Activated T-helper 2 cell treated with anti-CD3 and anti-CD28 coated beads, Interferon-gamma antibody, Interleukin-2, Interleukin-4, amounts not matched to agents 10 μg/mL and 5 μg/mL and 100 μg/mL, durations not matched to agents 14 hours and 24 hours and 36 hours (primary cell): ENCODE measurements at regions of chr1 and their contacts with region 1.

Region 1: DNA sequence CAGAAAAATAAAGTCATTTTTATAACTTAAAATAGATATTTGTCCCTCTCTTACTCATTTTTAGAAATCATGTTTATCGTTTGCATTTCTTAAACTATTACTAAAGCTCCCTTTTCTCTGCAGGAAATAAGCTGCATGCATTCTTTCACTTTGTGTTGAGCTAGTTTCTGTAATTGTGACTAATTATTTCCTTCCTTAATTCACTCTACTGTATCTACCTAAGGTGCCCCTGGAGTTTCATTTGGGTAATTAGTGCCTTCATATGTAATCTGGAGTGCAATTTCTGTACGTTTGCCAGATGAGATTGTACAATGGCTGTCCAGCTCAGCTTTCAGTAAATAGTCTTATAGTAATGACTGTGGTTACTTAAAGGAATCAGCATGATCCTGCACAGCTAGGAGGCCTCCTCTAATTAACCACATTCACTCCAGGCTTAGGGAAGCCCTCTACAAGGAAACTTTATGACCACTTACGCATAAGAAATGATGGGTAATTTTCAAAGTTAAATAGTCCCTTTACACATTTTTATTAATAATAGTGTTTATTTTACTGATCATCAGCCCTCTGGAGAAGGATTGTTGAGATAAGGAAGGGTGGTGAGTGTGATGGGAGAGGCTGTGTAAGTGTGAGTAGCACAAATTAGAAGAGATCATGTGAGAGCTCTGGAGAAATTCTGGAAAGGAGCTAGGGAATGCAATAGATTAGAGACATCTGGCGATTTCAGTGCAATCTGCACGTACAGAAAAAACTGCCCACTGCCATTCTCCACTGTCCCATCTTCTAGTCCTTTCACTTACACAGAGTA is 86.8 kb downstream of the LRRC8C start:
- DNase-seq: no peak
- H3K4me3 Mint-ChIP-seq: peak overlapping the region; percentile 75
- H3K27ac Mint-ChIP-seq: peak overlapping the region; percentile 99
- H3K4me1 Mint-ChIP-seq: peaks cover 82% of the 10 kb centered on the region
- H3K27me3 Mint-ChIP-seq: no peaks in the 10 kb centered on the region

Region 2: GRCh38 chr1:89274411-89274857 is 445.3 kb before region 1 on chr1:
- intact Hi-C with region 1: loop called (anchors 10 kb)
- DNase-seq: no peak
- H3K4me3 Mint-ChIP-seq: peak overlapping the region; percentile 71
- H3K27ac Mint-ChIP-seq: peak overlapping the region; percentile 93
- H3K4me1 Mint-ChIP-seq: peaks cover 71% of the 10 kb centered on the region
- H3K27me3 Mint-ChIP-seq: no peaks in the 10 kb centered on the region

Region 3: DNA sequence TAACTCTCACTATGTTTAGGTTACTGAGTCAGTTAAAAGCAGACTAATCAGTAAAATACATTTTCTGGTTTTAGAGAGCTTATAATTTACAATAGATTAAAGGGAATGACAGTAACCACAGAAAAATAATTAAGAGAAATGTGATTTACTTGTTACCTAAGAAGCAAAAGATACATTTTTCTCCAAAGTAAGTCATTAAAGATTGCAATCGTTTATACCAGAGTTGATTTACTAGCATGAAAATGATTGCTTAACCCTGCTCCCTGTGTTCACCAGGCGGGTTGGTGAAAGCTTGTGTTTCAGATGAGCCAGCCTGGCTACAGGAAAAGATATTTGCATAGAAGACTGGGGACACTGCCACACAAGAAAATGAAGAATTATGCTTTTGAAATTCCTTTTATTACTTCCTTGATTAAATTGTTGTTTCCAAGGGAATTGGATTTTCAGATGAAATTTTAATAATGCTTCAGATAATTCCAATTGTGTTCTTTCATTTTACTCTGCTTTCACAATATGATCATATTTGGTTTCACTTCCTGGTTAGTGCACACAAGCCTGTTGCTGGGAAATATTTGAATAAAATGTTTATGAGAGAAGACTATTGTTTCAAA is 167.1 kb before region 1 on chr1:
- intact Hi-C with region 1: loop called (anchors 1 kb)
- DNase-seq: no peak
- H3K4me3 Mint-ChIP-seq: peak overlapping the region; percentile 38
- H3K27ac Mint-ChIP-seq: peak overlapping the region; percentile 74
- H3K4me1 Mint-ChIP-seq: peaks cover 77% of the 10 kb centered on the region
- H3K27me3 Mint-ChIP-seq: no peaks in the 10 kb centered on the region

Region 4: GRCh38 chr1:89657886-89658285 is 61.8 kb before region 1 on chr1:
- intact Hi-C with region 1: loop called (anchors 1 kb)
- DNase-seq: no peak
- H3K4me3 Mint-ChIP-seq: peak overlapping the region; percentile 14
- H3K27ac Mint-ChIP-seq: peak overlapping the region; percentile 75
- H3K4me1 Mint-ChIP-seq: peaks cover 79% of the 10 kb centered on the region
- H3K27me3 Mint-ChIP-seq: no peaks in the 10 kb centered on the region

Region 5: GRCh38 chr1:89732643-89733222 is 13.0 kb after region 1 on chr1:
- intact Hi-C with region 1: loop called (anchors 1 kb)
- DNase-seq: no peak
- H3K4me3 Mint-ChIP-seq: peak overlapping the region; percentile 17
- H3K27ac Mint-ChIP-seq: peak overlapping the region; percentile 90
- H3K4me1 Mint-ChIP-seq: peaks cover 62% of the 10 kb centered on the region
- H3K27me3 Mint-ChIP-seq: no peaks in the 10 kb centered on the region

Region 6: DNA sequence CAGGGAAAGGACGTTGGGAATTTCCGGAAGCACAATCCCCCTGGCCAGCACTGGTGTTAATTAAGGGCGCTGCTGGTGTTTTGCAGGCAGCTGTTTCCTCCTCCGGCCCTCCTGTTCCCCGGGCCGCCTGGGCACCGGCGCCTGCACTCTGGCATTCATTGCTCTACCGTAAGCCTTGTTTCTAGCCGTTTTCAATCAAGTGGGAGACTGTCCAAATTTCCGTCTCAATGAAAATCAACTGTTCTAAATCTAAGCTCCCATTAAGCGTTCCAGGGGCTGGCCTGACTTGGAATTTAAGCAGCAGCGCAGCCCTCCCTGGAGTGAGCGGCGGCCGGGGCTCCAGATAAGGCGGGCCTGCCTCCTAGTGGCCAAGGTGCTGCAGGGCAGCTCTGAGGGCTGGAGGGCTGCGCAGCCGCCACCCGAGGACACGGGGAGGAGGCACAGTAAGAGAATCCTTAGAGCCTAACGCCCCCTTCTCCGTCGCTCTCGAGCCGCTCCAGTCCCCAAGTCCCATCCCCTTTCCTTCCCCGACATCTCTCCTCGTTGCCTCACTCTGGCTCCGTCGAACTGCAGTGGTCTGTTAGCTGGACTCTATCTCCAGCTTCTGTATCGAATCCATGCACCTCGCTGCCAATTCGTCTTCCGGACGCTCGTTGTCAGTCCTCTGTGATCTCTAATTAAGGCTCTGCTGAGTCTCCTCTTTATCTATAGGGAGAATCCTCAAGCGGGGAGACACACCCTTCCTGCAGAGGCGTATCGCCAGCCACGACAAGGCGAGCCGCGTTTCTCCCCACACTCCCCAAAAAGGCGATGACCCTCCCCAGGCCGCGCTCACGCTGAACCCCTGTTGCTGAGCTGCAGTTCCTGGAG is 43.3 kb after region 1 on chr1:
- intact Hi-C with region 1: loop called (anchors 1 kb)
- DNase-seq: peak; percentile 80
- H3K4me3 Mint-ChIP-seq: peak overlapping the region; percentile 89
- H3K27ac Mint-ChIP-seq: peak overlapping the region; percentile 95
- H3K4me1 Mint-ChIP-seq: peaks cover 56% of the 10 kb centered on the region
- H3K27me3 Mint-ChIP-seq: no peaks in the 10 kb centered on the region